ENCODE measurements at regions of chr12 and their contacts with region 1.

Region 1: GRCh38 chr12:6367065-6367968 is 8.0 kb downstream of the SCNN1A start:
- DNase-seq: peak in 1 of 2 experiments; percentile 29
- H3K4me3 ChIP-seq: no peak overlapping the region
- H3K4me3 Mint-ChIP-seq: no peak overlapping the region
- H3K27ac Mint-ChIP-seq: peak overlapping the region; percentile 12
- H3K4me1 ChIP-seq: peaks cover 25% of the 10 kb centered on the region
- H3K4me1 Mint-ChIP-seq: peaks cover 38% of the 10 kb centered on the region
- H3K27me3 ChIP-seq: no peaks in the 10 kb centered on the region
- H3K27me3 Mint-ChIP-seq: no peaks in the 10 kb centered on the region
- CTCF ChIP-seq: peak in 1 of 2 experiments; percentile 1

Region 2: DNA sequence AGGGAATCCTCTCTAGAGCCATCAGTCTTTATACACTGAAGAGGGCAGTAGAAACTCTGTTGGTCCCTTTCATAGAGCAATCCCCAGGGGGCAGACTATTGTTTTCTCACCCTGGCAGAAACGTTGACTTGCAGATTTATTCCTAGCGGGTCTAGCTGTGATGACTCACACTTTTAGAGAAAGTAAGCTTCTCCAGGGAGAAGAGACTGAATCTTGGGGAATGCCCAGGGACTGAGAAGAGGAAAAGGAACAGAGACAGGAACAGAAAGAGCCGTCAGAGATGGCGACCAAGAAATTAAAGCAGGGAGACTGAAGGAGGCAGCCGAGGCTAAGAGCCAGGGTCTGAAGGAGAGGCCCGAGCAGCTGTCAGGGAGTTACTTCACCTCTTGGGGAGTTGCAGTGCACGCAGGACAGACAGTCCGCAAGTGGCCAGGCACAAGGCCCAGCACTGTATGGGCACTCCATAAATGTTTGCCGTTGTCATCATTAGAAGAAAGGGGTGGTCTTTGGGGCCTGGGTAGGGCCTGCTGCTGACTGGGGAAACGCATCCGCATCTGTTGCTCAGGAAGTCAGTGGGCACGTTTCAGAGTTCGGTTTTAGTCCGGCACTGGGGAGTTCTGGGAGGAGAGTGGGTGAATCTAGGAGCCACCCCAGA is 43.9 kb before region 1 on chr12:
- CTCF ChIA-PET with region 1: interaction called, 24 read pairs
- POLR2A ChIA-PET with region 1: interaction called, 5 read pairs
- intact Hi-C with region 1: loop called (anchors 1 kb)
- DNase-seq: peak; percentile 70 to 80
- H3K4me3 ChIP-seq: no peak overlapping the region
- H3K4me3 Mint-ChIP-seq: no peak overlapping the region
- H3K27ac Mint-ChIP-seq: peak overlapping the region; percentile 88
- H3K4me1 ChIP-seq: peaks cover 20% of the 10 kb centered on the region
- H3K4me1 Mint-ChIP-seq: peaks cover 19% of the 10 kb centered on the region
- H3K27me3 ChIP-seq: no peaks in the 10 kb centered on the region
- H3K27me3 Mint-ChIP-seq: no peaks in the 10 kb centered on the region
- CTCF ChIP-seq: peak; percentile 61 to 87

Region 3: DNA sequence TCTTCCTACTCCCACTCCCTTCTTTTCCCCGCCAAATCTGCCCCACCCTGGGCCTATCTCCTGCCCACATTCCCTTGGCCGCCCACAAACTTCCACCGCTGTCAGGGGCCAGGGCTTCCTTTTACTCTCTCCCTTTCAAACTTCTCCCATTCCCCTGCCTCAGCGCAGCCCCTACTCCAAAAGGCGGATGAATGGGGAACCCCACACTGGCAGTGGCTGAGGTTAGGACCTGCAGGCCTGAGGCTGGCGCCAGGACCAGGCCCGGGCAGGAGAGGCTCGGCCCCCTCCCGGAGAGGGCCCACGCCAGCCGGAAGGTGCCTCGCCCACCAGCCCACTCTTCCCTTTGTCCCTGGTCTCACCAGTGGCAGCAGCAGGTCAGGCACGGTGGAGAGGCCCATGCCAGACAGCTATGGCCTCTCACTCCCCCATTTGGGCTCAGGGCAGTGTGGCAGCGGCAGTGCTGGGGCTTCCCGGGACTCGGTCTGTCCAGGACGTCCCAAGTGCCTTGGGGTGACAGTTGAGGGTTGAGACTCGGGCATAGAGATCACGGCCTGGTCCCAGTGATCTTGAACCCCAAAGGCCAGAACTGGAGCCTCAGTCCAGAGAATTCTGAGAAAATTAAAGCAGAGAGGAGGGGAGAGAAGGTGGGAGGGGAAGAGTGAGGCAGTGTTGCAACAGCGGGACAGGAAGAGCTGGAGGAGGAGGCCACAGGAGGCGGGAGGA is 25.7 kb before region 1 on chr12 and contains the start of gene TNFRSF1A:
- CTCF ChIA-PET with region 1: interaction called, 32 read pairs
- POLR2A ChIA-PET with region 1: interaction called, 42 read pairs
- intact Hi-C with region 1: loop called (anchors 1 kb)
- DNase-seq: peak; percentile 82
- H3K4me3 ChIP-seq: peak within 1 kb of the TSS; percentile 76
- H3K4me3 Mint-ChIP-seq: no peak within 1 kb of the TSS
- H3K27ac Mint-ChIP-seq: no peak within 1 kb of the TSS
- H3K4me1 ChIP-seq: peaks cover 56% of the 10 kb centered on the region
- H3K4me1 Mint-ChIP-seq: peaks cover 36% of the 10 kb centered on the region
- H3K27me3 ChIP-seq: no peaks in the 10 kb centered on the region
- H3K27me3 Mint-ChIP-seq: no peaks in the 10 kb centered on the region
- CTCF ChIP-seq: no peak
- total RNA-seq, gene TNFRSF1A: 79.0 and 79.4 TPM in 2 replicates

Region 4: DNA sequence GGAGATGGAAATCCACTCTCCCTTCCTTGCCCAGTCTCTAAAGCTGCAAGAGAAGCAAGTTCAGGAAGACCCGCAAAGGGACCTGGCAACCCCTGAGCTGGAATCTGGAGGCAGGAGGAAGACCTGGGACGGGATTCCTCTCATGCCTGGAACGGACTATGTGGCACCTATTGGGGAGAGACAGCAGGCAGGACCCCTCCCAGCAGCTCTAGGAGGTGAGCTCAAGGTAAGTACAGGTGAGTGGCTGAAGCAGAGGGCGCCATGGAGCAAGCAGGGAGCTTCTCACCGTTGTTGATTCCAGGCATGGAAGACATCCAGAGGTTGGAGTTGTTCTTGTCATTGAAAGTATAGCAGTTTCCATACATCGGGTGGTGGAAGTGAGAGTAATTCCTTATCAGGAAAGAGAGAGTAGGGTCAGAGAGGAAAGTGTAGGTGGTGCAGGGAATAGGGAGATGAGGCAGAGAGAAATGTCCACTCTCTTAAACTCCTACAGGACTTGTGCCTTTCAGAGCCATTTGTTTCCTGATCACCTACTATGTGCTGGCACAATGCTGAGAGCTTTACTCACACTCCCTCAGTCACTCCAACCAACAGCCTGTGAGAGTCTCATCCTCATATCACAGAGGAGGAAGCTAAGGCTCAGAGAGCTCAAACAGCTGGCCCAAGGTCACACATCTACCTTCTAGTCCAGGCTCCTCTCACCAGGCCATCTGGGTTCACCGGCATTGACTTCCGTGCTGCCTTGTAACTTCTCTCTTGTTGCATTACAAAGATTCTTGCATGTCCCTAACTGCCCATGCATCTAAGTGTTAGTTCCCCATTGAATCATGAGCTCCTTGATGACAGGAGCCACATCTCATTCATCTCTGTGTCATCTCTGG is 11.6 kb before region 1 on chr12:
- CTCF ChIA-PET with region 1: interaction called, 16 read pairs
- POLR2A ChIA-PET with region 1: interaction called, 6 read pairs
- intact Hi-C with region 1: no loop called
- DNase-seq: peak; percentile 62 to 74
- H3K4me3 ChIP-seq: no peak overlapping the region
- H3K4me3 Mint-ChIP-seq: no peak overlapping the region
- H3K27ac Mint-ChIP-seq: no peak overlapping the region
- H3K4me1 ChIP-seq: peaks cover 10% of the 10 kb centered on the region
- H3K4me1 Mint-ChIP-seq: peaks cover 8% of the 10 kb centered on the region
- H3K27me3 ChIP-seq: no peaks in the 10 kb centered on the region
- H3K27me3 Mint-ChIP-seq: no peaks in the 10 kb centered on the region
- CTCF ChIP-seq: peak; percentile 24 to 48

Region 5: GRCh38 chr12:6383572-6384498 is 16.5 kb after region 1 on chr12 and contains the start of gene LTBR:
- CTCF ChIA-PET with region 1: interaction called, 17 read pairs
- POLR2A ChIA-PET with region 1: interaction called, 17 read pairs
- intact Hi-C with region 1: loop called (anchors 1 kb)
- DNase-seq: peak; percentile 97 to 99
- H3K4me3 ChIP-seq: peak within 1 kb of the TSS; percentile 92
- H3K4me3 Mint-ChIP-seq: peak within 1 kb of the TSS; percentile 96
- H3K27ac Mint-ChIP-seq: peak within 1 kb of the TSS; percentile 92
- H3K4me1 ChIP-seq: peaks cover 25% of the 10 kb centered on the region
- H3K4me1 Mint-ChIP-seq: peaks cover 15% of the 10 kb centered on the region
- H3K27me3 ChIP-seq: no peaks in the 10 kb centered on the region
- H3K27me3 Mint-ChIP-seq: no peaks in the 10 kb centered on the region
- CTCF ChIP-seq: peak in 1 of 2 experiments; percentile 48
- total RNA-seq, gene LTBR: 194 and 197 TPM in 2 replicates

Region 6: DNA sequence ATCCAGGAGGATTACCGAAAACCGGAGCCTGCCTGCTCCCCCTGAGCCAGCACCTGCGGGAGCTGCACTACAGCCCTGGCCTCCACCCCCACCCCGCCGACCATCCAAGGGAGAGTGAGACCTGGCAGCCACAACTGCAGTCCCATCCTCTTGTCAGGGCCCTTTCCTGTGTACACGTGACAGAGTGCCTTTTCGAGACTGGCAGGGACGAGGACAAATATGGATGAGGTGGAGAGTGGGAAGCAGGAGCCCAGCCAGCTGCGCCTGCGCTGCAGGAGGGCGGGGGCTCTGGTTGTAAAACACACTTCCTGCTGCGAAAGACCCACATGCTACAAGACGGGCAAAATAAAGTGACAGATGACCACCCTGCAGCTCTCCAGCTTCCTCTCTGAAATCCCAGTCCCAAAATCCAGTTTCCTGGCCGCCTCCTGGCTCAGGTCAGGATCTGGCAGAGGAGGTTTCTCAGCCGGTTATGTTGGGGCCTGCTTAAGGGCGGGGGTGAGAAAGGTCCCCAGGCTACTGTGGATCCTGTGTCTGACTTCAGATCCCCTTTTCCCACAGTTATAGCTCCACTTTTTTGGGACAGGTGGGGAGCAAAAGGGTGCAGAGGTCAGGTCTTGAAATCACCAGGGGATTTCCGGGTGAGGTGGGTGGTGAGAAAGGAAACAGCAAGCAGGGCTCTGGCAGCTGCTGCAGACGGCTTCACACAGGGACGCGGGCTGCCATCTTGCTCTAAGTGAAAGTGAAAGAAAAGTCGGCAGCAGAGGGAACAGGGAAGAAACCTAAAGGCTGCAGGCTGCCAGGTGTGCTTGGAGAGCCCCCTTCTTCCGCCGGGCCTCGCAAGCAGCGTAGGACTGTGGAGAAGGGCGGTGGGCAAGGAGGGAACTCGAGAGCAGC is 84.3 kb after region 1 on chr12 and contains the start of gene TAPBPL:
- CTCF ChIA-PET with region 1: no interaction called
- POLR2A ChIA-PET with region 1: no interaction called
- intact Hi-C with region 1: loop called (anchors 1 kb)
- DNase-seq: peak; percentile 88 to 89
- H3K4me3 ChIP-seq: peak within 1 kb of the TSS; percentile 82
- H3K4me3 Mint-ChIP-seq: peak within 1 kb of the TSS; percentile 79
- H3K27ac Mint-ChIP-seq: peak within 1 kb of the TSS; percentile 93
- H3K4me1 ChIP-seq: peaks cover 9% of the 10 kb centered on the region; the same call in 1 of the 2 replicates
- H3K4me1 Mint-ChIP-seq: peaks cover 4% of the 10 kb centered on the region
- H3K27me3 ChIP-seq: no peaks in the 10 kb centered on the region
- H3K27me3 Mint-ChIP-seq: no peaks in the 10 kb centered on the region
- CTCF ChIP-seq: no peak
- total RNA-seq, gene TAPBPL: 9.1 and 9.7 TPM in 2 replicates

Measured in Caco-2 (cell line).